PC-9 (cell line): ENCODE measurements at regions of chr1 and their contacts with region 1.

Region 1: GRCh38 chr1:156368889-156369684 is at the start of gene RHBG:
- DNase-seq: peak in 1 of 2 experiments; percentile 74
- H3K4me3 ChIP-seq: peak within 1 kb of the TSS; percentile 71
- H3K27ac ChIP-seq: no peak within 1 kb of the TSS
- H3K4me1 ChIP-seq: peaks cover 45% of the 10 kb centered on the region
- H3K27me3 ChIP-seq: no peaks in the 10 kb centered on the region
- CTCF ChIP-seq: no peak
- total RNA-seq, gene RHBG: 1.8 and 4.0 TPM in 2 replicates

Region 2: GRCh38 chr1:156379420-156380165 is 10.5 kb after region 1 on chr1:
- CTCF ChIA-PET with region 1: interaction called, 10 read pairs
- POLR2A ChIA-PET with region 1: no interaction called
- intact Hi-C with region 1: no loop called
- DNase-seq: no peak
- H3K4me3 ChIP-seq: no peak overlapping the region
- H3K27ac ChIP-seq: no peak overlapping the region
- H3K4me1 ChIP-seq: peaks cover 21% of the 10 kb centered on the region
- H3K27me3 ChIP-seq: no peaks in the 10 kb centered on the region
- CTCF ChIP-seq: no peak

Region 3: DNA sequence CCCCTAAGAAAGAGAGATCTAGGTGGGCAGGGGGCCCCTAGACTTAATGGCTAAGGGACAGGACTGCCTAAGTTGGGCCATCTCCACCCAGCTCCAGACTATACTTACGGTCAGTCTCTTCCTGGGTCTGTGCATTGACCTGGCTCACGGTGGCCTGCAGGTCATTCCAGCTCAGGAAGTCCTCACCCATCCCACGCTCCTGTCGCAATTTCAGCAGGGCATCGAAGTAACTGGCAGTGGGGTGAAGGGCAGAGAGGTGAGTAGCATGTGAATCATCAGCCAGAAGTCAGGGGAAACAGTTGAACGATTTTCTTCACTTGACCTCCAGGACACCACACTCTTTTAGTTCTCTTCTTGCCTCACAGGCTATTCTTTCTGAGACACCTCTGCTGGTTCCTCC is 182.8 kb after region 1 on chr1:
- CTCF ChIA-PET with region 1: no interaction called
- POLR2A ChIA-PET with region 1: no interaction called
- intact Hi-C with region 1: no loop called
- DNase-seq: peak; percentile 55 to 93
- H3K4me3 ChIP-seq: no peak overlapping the region; the same call in 1 of the 2 replicates
- H3K27ac ChIP-seq: peak overlapping the region; percentile 88
- H3K4me1 ChIP-seq: peaks cover 35% of the 10 kb centered on the region
- H3K27me3 ChIP-seq: no peaks in the 10 kb centered on the region
- CTCF ChIP-seq: no peak